Calu3 (cell line): ENCODE measurements at regions of chr20 and their contacts with region 1.

Region 1: GRCh38 chr20:53939572-53940359 is 130.6 kb downstream of the BCAS1 start:
- DNase-seq: peak; percentile 99
- H3K4me3 Mint-ChIP-seq: peak overlapping the region; percentile 28
- H3K27ac Mint-ChIP-seq: peak overlapping the region; percentile 68
- H3K4me1 Mint-ChIP-seq: peaks cover 78% of the 10 kb centered on the region
- H3K27me3 Mint-ChIP-seq: no peaks in the 10 kb centered on the region
- CTCF ChIP-seq: peak; percentile 92

Region 2: DNA sequence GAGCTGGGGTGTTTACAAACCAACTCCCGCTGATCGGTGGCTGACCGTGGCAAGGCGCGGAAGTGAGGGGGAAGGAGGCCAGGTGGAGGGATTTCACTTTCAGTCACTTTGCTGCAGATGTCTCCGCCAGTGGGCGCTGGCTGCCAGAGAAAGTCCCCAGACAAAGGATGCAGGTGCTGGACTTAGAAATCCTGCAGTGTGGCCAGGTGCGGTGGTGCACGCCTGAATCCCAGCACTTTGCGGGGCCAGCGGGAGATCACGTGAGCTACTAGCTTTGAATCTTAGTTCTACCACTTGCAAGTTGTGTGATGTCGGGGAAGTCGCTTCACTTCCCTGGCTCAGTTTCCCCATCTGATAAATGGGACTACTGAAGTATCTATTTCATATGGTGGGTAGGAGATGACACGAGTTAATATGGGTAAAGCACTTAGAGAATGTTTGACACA is 526.6 kb before region 1 on chr20:
- CTCF ChIA-PET with region 1: no interaction called
- intact Hi-C with region 1: loop called (anchors 1 kb)
- DNase-seq: peak; percentile 74
- H3K4me3 Mint-ChIP-seq: no peak overlapping the region
- H3K27ac Mint-ChIP-seq: no peak overlapping the region
- H3K4me1 Mint-ChIP-seq: no peaks in the 10 kb centered on the region
- H3K27me3 Mint-ChIP-seq: peaks cover 53% of the 10 kb centered on the region
- CTCF ChIP-seq: peak; percentile 54

Region 3: GRCh38 chr20:53623454-53624211 is 316.1 kb before region 1 on chr20:
- CTCF ChIA-PET with region 1: interaction called, 13 read pairs
- intact Hi-C with region 1: no loop called
- DNase-seq: peak; percentile 71
- H3K4me3 Mint-ChIP-seq: peak overlapping the region; percentile 67
- H3K27ac Mint-ChIP-seq: peak overlapping the region; percentile 99
- H3K4me1 Mint-ChIP-seq: peaks cover 40% of the 10 kb centered on the region
- H3K27me3 Mint-ChIP-seq: no peaks in the 10 kb centered on the region
- CTCF ChIP-seq: no peak

Region 4: DNA sequence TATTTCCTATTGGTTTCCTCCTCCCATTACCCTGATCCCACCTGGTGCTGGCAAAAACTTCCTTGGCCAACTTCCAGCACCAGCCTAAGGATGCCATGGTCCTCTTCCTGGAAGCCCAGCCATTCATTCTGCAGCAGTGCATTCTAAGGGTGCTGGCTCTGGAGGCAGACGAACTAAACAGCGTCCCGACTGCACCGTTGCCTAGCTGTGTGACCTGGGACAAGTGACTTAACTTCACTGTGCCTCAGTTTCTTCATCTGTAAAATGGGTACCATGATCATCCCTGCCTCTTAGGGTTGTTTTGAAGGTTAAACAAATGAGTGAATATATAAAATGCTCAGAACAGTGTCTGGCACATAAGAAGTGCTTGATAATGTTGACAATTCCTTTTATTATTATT is 225.2 kb before region 1 on chr20:
- CTCF ChIA-PET with region 1: interaction called, 10 read pairs
- intact Hi-C with region 1: no loop called
- DNase-seq: no peak
- H3K4me3 Mint-ChIP-seq: no peak overlapping the region
- H3K27ac Mint-ChIP-seq: no peak overlapping the region
- H3K4me1 Mint-ChIP-seq: peaks cover 7% of the 10 kb centered on the region
- H3K27me3 Mint-ChIP-seq: no peaks in the 10 kb centered on the region
- CTCF ChIP-seq: no peak

Region 5: DNA sequence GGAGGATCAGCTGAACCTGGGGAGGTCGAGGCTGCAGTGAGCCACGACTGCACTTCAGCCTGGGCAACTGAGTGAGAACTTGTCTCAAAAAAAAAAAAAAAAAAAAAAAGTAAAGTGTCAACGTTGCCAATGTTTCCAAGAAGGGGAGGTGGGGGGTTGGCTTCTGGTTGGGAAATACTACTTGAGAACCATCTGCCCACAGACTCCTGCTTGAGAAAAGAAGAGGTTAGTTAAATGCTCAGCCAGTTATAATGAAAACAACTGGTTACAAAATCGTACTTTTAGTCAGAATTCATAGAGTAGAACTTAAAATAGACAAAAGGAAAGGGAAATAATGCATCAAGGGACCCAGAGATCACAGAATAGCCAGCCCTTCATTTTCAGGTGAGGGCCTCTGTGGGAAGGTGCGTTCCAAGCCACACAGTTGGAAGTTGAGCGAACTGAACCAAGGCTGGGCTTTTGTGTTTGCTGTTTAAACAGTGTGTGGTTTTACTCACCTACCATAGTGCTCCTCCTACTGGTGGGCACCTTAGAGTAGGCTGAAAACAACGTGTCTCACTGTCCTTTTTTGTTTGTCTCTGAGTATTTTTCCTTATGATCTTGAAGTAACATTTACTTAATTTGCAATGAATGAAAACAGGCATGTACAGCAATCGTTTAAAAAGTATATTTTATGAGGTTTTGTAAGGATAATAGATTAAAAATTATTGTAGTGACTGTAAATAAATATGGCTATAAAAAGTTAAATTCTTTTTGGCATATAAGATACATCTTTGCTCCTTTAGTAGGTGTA is 70.1 kb before region 1 on chr20:
- CTCF ChIA-PET with region 1: interaction called, 8 read pairs
- intact Hi-C with region 1: loop called (anchors 1 kb)
- DNase-seq: peak; percentile 90
- H3K4me3 Mint-ChIP-seq: no peak overlapping the region
- H3K27ac Mint-ChIP-seq: peak overlapping the region; percentile 80
- H3K4me1 Mint-ChIP-seq: peaks cover 76% of the 10 kb centered on the region
- H3K27me3 Mint-ChIP-seq: no peaks in the 10 kb centered on the region
- CTCF ChIP-seq: peak; percentile 77

Region 6: GRCh38 chr20:53926428-53927028 is 13.2 kb before region 1 on chr20:
- CTCF ChIA-PET with region 1: interaction called, 19 read pairs
- intact Hi-C with region 1: no loop called
- DNase-seq: peak; percentile 82
- H3K4me3 Mint-ChIP-seq: peak overlapping the region; percentile 31
- H3K27ac Mint-ChIP-seq: peak overlapping the region; percentile 70
- H3K4me1 Mint-ChIP-seq: peaks cover 67% of the 10 kb centered on the region
- H3K27me3 Mint-ChIP-seq: no peaks in the 10 kb centered on the region
- CTCF ChIP-seq: no peak

Region 7: GRCh38 chr20:54182841-54183240 is 243.1 kb after region 1 on chr20:
- CTCF ChIA-PET with region 1: no interaction called
- intact Hi-C with region 1: no loop called
- DNase-seq: no peak
- H3K4me3 Mint-ChIP-seq: no peak overlapping the region
- H3K27ac Mint-ChIP-seq: no peak overlapping the region
- H3K4me1 Mint-ChIP-seq: peaks cover 51% of the 10 kb centered on the region
- H3K27me3 Mint-ChIP-seq: no peaks in the 10 kb centered on the region
- CTCF ChIP-seq: no peak